Left colon (tissue), 2 donors: ENCODE measurements at regions of chr15 and their contacts with region 1.

Region 1: GRCh38 chr15:52256366-52256765 is 39.2 kb downstream of the MYO5C start:
- DNase-seq: peak; percentile 45 to 76
- ATAC-seq: peak; percentile 65

Region 2: GRCh38 chr15:52349052-52349700 is 92.8 kb after region 1 on chr15:
- intact Hi-C with region 1: loop called in 1 of 2 experiments (anchors 10 kb)
- DNase-seq: no peak
- ATAC-seq: peak; percentile 41